PC-9 (cell line): ENCODE measurements at regions of chr11 and their contacts with region 1.

Region 1: GRCh38 chr11:65711785-65712632 is at the start of gene KAT5:
- DNase-seq: peak; percentile 96 to 99
- H3K4me3 ChIP-seq: peak within 1 kb of the TSS; percentile 86
- H3K27ac ChIP-seq: peak within 1 kb of the TSS; percentile 91
- H3K4me1 ChIP-seq: peaks cover 13% of the 10 kb centered on the region
- H3K27me3 ChIP-seq: no peaks in the 10 kb centered on the region
- CTCF ChIP-seq: peak; percentile 97
- total RNA-seq, gene KAT5: 49.6 and 57.1 TPM in 2 replicates

Region 2: GRCh38 chr11:64826578-64827450 is 885.2 kb before region 1 on chr11:
- CTCF ChIA-PET with region 1: no interaction called
- POLR2A ChIA-PET with region 1: no interaction called
- intact Hi-C with region 1: no loop called
- DNase-seq: no peak
- H3K4me3 ChIP-seq: no peak overlapping the region
- H3K27ac ChIP-seq: no peak overlapping the region
- H3K4me1 ChIP-seq: no peaks in the 10 kb centered on the region
- H3K27me3 ChIP-seq: no peaks in the 10 kb centered on the region
- CTCF ChIP-seq: no peak

Region 3: GRCh38 chr11:65779851-65780577 is 68.0 kb after region 1 on chr11:
- CTCF ChIA-PET with region 1: interaction called, 22 read pairs
- POLR2A ChIA-PET with region 1: no interaction called
- intact Hi-C with region 1: loop called (anchors 1 kb)
- DNase-seq: peak; percentile 62 to 90
- H3K4me3 ChIP-seq: peak overlapping the region; percentile 58
- H3K27ac ChIP-seq: peak overlapping the region; percentile 52
- H3K4me1 ChIP-seq: peaks cover 28% of the 10 kb centered on the region
- H3K27me3 ChIP-seq: no peaks in the 10 kb centered on the region
- CTCF ChIP-seq: peak; percentile 94

Region 4: GRCh38 chr11:65817835-65818742 is 106.1 kb after region 1 on chr11:
- CTCF ChIA-PET with region 1: interaction called, 10 read pairs
- POLR2A ChIA-PET with region 1: interaction called, 6 read pairs
- intact Hi-C with region 1: loop called (anchors 1 kb)
- DNase-seq: peak; percentile 71 to 95
- H3K4me3 ChIP-seq: peak overlapping the region; percentile 70
- H3K27ac ChIP-seq: peak overlapping the region; percentile 55
- H3K4me1 ChIP-seq: peaks cover 8% of the 10 kb centered on the region; the same call in 1 of the 2 replicates
- H3K27me3 ChIP-seq: no peaks in the 10 kb centered on the region
- CTCF ChIP-seq: peak; percentile 96

Region 5: DNA sequence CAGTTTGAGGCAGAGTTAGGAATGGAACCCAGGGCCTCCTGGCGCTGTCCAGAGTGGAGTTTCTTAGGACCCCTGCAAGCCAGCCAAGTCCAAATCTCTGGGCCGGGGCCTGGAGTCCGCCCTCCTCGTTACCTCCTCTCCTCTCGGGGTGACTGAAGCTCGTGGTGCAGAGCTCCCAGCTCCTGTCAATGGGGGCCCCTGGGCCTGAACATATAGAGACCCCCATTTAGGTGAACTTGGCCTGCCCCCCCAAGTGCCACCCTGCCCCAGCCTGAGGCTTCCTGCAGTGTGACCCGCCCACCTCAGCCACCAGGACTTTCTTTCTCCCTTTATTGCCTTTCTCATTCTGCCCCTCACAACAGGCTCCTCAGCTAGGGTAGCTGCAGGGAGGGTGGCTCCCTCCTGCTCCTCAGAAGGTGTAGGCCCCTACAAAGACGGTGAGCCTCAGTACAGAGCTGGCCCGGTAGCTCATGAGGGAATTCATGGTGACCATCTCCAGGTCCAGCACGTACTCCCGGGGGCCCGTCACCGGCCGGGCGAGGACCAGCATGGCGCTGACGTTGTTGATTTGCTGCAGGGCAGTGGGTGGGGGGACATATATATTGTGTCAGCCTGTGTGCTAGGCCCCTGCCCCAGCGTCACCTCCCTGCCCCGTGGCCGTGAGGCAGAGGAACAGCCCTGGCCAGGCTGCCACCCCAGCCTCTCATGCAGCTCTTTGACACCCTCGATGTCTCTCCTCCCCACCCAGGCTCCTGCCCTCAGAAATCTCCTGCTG is 154.7 kb after region 1 on chr11:
- CTCF ChIA-PET with region 1: interaction called, 18 read pairs
- POLR2A ChIA-PET with region 1: no interaction called
- intact Hi-C with region 1: no loop called
- DNase-seq: no peak
- H3K4me3 ChIP-seq: no peak overlapping the region
- H3K27ac ChIP-seq: no peak overlapping the region
- H3K4me1 ChIP-seq: peaks cover 5% of the 10 kb centered on the region
- H3K27me3 ChIP-seq: no peaks in the 10 kb centered on the region
- CTCF ChIP-seq: no peak

Region 6: GRCh38 chr11:65979261-65979759 is 267.3 kb after region 1 on chr11:
- CTCF ChIA-PET with region 1: interaction called, 10 read pairs
- POLR2A ChIA-PET with region 1: no interaction called
- intact Hi-C with region 1: no loop called
- DNase-seq: no peak
- H3K4me3 ChIP-seq: no peak overlapping the region
- H3K27ac ChIP-seq: no peak overlapping the region
- H3K4me1 ChIP-seq: no peaks in the 10 kb centered on the region
- H3K27me3 ChIP-seq: no peaks in the 10 kb centered on the region
- CTCF ChIP-seq: no peak

Region 7: GRCh38 chr11:66268283-66268951 is 556.4 kb after region 1 on chr11 and contains the start of gene RAB1B:
- CTCF ChIA-PET with region 1: interaction called, 11 read pairs
- POLR2A ChIA-PET with region 1: no interaction called
- intact Hi-C with region 1: no loop called
- DNase-seq: peak; percentile 98 to 100
- H3K4me3 ChIP-seq: peak within 1 kb of the TSS; percentile 95
- H3K27ac ChIP-seq: peak within 1 kb of the TSS; percentile 57
- H3K4me1 ChIP-seq: peaks cover 8% of the 10 kb centered on the region
- H3K27me3 ChIP-seq: no peaks in the 10 kb centered on the region
- CTCF ChIP-seq: no peak
- total RNA-seq, gene RAB1B: 209 and 232 TPM in 2 replicates